Endothelial cell of umbilical vein (primary cell): ENCODE measurements at regions of chr17 and their contacts with region 1.

Region 1: GRCh38 chr17:57645950-57646665 is 99.0 kb downstream of the CCDC182 start:
- DNase-seq: no peak
- H3K4me3 ChIP-seq: no peak overlapping the region
- H3K27ac ChIP-seq: no peak overlapping the region
- H3K4me1 ChIP-seq: no peaks in the 10 kb centered on the region
- H3K27me3 ChIP-seq: no peaks in the 10 kb centered on the region
- CTCF ChIP-seq: no peak
- POLR2A ChIP-seq: no peak

Region 2: GRCh38 chr17:57622683-57623433 is 23.2 kb before region 1 on chr17:
- CTCF ChIA-PET with region 1: no interaction called
- POLR2A ChIA-PET with region 1: no interaction called
- dilution Hi-C with region 1: no loop called
- intact Hi-C with region 1: loop called (anchors 2 kb)
- DNase-seq: peak; percentile 39
- H3K4me3 ChIP-seq: no peak overlapping the region
- H3K27ac ChIP-seq: peak overlapping the region; percentile 26
- H3K4me1 ChIP-seq: peaks cover 13% of the 10 kb centered on the region
- H3K27me3 ChIP-seq: no peaks in the 10 kb centered on the region
- CTCF ChIP-seq: no peak
- POLR2A ChIP-seq: no peak

Region 3: GRCh38 chr17:57902800-57903759 is 257.0 kb after region 1 on chr17:
- CTCF ChIA-PET with region 1: no interaction called
- POLR2A ChIA-PET with region 1: no interaction called
- dilution Hi-C with region 1: no loop called
- intact Hi-C with region 1: no loop called
- DNase-seq: peak; percentile 80
- H3K4me3 ChIP-seq: no peak overlapping the region
- H3K27ac ChIP-seq: peak overlapping the region; percentile 71
- H3K4me1 ChIP-seq: peaks cover 19% of the 10 kb centered on the region
- H3K27me3 ChIP-seq: no peaks in the 10 kb centered on the region
- CTCF ChIP-seq: no peak
- POLR2A ChIP-seq: no peak